ENCODE measurements at regions of chr13 and their contacts with region 1.

Region 1: GRCh38 chr13:40221460-40222201 is 444.8 kb downstream of the FOXO1 start:
- DNase-seq: peak in 7 of 9 donors; percentile 61 to 86 (median 77)
- ATAC-seq: peak; percentile 88
- H3K4me3 ChIP-seq: peak overlapping the region; percentile 27
- H3K4me3 Mint-ChIP-seq: peak overlapping the region; percentile 32 to 73 (median 66)
- H3K27ac ChIP-seq: peak overlapping the region; percentile 59
- H3K27ac Mint-ChIP-seq: peak overlapping the region; percentile 74 to 96 (median 90)
- H3K4me1 ChIP-seq: peaks cover 31 to 37% of the 10 kb centered on the region in 2 donors
- H3K4me1 Mint-ChIP-seq: peaks cover 22 to 70% (median 49%) of the 10 kb centered on the region in 7 donors
- H3K27me3 ChIP-seq: no peaks in the 10 kb centered on the region
- H3K27me3 Mint-ChIP-seq: no peaks in the 10 kb centered on the region

Region 2: GRCh38 chr13:40206241-40207000 is 15.2 kb before region 1 on chr13:
- CTCF ChIA-PET with region 1: interaction called, 3 read pairs
- POLR2A ChIA-PET with region 1: interaction called, 27 read pairs
- intact Hi-C with region 1: loop called in 1 of 2 experiments (anchors 2 kb)
- DNase-seq: peak in 8 of 9 donors; percentile 14 to 82 (median 78)
- ATAC-seq: peak; percentile 92
- H3K4me3 ChIP-seq: peak overlapping the region; percentile 19
- H3K4me3 Mint-ChIP-seq: peak overlapping the region; percentile 60 to 86 (median 80)
- H3K27ac ChIP-seq: peak overlapping the region; percentile 73
- H3K27ac Mint-ChIP-seq: peak overlapping the region; percentile 97 to 100 (median 99)
- H3K4me1 ChIP-seq: peaks cover 44 to 70% of the 10 kb centered on the region in 2 donors
- H3K4me1 Mint-ChIP-seq: peaks cover 41 to 88% (median 84%) of the 10 kb centered on the region in 7 donors
- H3K27me3 ChIP-seq: no peaks in the 10 kb centered on the region
- H3K27me3 Mint-ChIP-seq: no peaks in the 10 kb centered on the region